Breast epithelium (tissue), 4 donors: ENCODE measurements at regions of chr11 and their contacts with region 1.

Region 1: GRCh38 chr11:64406221-64406946 is 47.4 kb downstream of the RPS6KA4 start:
- DNase-seq: no peak
- H3K4me3 ChIP-seq: no peak overlapping the region
- H3K27ac ChIP-seq: no peak overlapping the region
- H3K4me1 ChIP-seq: no peaks in the 10 kb centered on the region
- H3K27me3 ChIP-seq: no peaks in the 10 kb centered on the region
- CTCF ChIP-seq: no peak
- POLR2A ChIP-seq: no peak

Region 2: GRCh38 chr11:64372802-64373597 is 33.4 kb before region 1 on chr11:
- intact Hi-C with region 1: no loop called
- DNase-seq: no peak
- H3K4me3 ChIP-seq: no peak overlapping the region
- H3K27ac ChIP-seq: no peak overlapping the region
- H3K4me1 ChIP-seq: no peaks in the 10 kb centered on the region
- H3K27me3 ChIP-seq: no peaks in the 10 kb centered on the region
- CTCF ChIP-seq: no peak
- POLR2A ChIP-seq: no peak

Region 3: DNA sequence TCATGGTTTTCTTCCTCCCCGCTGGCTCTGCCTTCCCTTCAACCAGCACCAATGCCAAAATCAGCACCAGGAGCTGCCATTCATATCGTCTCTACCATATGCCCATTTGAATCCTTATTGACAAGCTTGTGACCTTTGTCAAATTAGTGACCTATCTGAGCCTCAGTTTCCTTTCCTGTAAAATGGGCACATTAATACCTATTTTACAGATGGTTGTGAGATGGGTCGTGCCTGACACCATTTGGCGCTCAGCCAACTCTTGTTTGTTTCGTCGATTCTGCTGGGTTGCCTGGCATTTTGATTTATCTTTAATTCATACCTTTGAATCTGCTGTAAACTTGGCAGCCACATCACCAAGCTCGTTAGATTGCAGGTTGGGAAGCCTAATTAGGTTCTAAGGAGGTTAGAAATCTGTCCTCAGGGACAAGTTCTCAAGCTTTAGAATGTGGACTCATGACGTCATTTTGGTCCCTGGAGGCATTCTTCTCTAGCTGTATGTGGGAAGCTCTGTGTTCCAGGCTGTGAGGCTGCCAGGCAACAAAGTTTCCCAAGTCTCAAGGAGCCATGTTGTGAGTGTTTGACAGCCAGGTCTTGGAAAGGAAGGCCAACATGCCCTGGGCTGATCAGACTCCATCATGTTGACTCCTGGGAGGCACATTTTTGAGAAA is 13.6 kb after region 1 on chr11:
- intact Hi-C with region 1: no loop called
- DNase-seq: no peak
- H3K4me3 ChIP-seq: no peak overlapping the region
- H3K27ac ChIP-seq: no peak overlapping the region
- H3K4me1 ChIP-seq: no peaks in the 10 kb centered on the region
- H3K27me3 ChIP-seq: no peaks in the 10 kb centered on the region
- CTCF ChIP-seq: no peak
- POLR2A ChIP-seq: no peak

Region 4: GRCh38 chr11:64461081-64461480 is 54.7 kb after region 1 on chr11:
- intact Hi-C with region 1: loop called (anchors 1 kb)
- DNase-seq: no peak
- H3K4me3 ChIP-seq: no peak overlapping the region
- H3K27ac ChIP-seq: no peak overlapping the region
- H3K4me1 ChIP-seq: no peaks in the 10 kb centered on the region
- H3K27me3 ChIP-seq: no peaks in the 10 kb centered on the region
- CTCF ChIP-seq: no peak
- POLR2A ChIP-seq: no peak